ENCODE measurements at regions of chr1 and their contacts with region 1.

Region 1: GRCh38 chr1:204207136-204207616 is 6.6 kb downstream of the GOLT1A start:
- DNase-seq: peak; percentile 51 to 80 (median 66)
- ATAC-seq: peak; percentile 98
- H3K4me3 ChIP-seq: no peak overlapping the region
- H3K4me3 Mint-ChIP-seq: no peak overlapping the region
- H3K27ac ChIP-seq: no peak overlapping the region
- H3K27ac Mint-ChIP-seq: no peak overlapping the region
- H3K4me1 ChIP-seq: peaks cover 7% of the 10 kb centered on the region
- H3K4me1 Mint-ChIP-seq: peaks cover 18% of the 10 kb centered on the region
- H3K27me3 ChIP-seq: peaks cover 5 to 14% of the 10 kb centered on the region in 2 experiments
- H3K27me3 Mint-ChIP-seq: peaks cover 57% of the 10 kb centered on the region
- CTCF ChIP-seq: peak; percentile 86

Region 2: DNA sequence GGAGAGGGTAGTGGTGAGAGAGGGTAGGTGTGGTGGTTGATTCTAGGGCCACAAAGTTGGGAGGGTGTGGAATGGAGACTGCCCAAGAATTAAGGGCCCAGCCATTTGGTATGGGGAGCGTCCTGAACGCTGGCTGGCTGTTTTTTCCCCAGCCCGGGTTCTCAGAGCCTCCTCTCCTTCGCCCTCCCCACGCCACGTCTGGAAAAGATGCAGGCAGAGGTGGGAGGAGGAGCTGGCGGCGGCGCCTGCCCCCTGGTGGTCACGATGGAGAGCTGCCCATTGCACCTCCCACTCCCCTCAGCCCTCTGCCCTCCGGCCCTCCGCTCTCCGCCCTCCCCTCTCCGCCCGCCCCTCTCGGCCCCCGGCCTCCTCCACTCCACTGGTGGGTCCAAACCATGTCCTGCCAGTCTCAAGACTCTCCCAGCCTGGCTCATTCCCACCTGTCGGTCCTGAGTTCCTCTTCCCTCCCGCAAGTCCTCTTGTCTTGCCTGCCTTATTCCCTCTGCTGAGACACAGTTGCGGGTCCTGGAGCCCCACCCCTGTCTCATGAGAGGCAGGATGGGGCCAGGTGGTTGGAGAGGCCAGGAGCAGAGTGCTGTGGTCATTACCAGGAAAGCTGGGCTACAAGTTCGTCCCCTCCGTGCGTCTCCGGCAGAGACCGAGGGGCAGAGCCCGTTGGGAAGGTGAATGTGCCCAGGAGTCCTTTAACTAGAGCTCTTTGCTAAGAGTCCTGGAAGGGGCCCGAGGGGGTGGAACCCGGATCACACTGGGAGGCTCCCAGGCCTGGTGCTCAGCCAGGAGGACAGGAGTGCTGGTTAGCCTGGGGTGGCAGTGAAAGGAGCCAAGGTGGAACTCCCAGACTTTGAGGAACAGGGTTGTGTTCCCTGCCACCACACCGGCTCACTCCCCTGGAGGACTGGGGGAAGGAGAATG is 77.9 kb before region 1 on chr1:
- CTCF ChIA-PET with region 1: no interaction called
- POLR2A ChIA-PET with region 1: no interaction called
- intact Hi-C with region 1: no loop called
- DNase-seq: peak; percentile 27 to 85 (median 42)
- ATAC-seq: peak; percentile 87
- H3K4me3 ChIP-seq: no peak overlapping the region
- H3K4me3 Mint-ChIP-seq: no peak overlapping the region
- H3K27ac ChIP-seq: no peak overlapping the region
- H3K27ac Mint-ChIP-seq: no peak overlapping the region
- H3K4me1 ChIP-seq: peaks cover 11% of the 10 kb centered on the region
- H3K4me1 Mint-ChIP-seq: peaks cover 9% of the 10 kb centered on the region
- H3K27me3 ChIP-seq: no peaks in the 10 kb centered on the region
- H3K27me3 Mint-ChIP-seq: no peaks in the 10 kb centered on the region
- CTCF ChIP-seq: peak; percentile 87

Region 3: DNA sequence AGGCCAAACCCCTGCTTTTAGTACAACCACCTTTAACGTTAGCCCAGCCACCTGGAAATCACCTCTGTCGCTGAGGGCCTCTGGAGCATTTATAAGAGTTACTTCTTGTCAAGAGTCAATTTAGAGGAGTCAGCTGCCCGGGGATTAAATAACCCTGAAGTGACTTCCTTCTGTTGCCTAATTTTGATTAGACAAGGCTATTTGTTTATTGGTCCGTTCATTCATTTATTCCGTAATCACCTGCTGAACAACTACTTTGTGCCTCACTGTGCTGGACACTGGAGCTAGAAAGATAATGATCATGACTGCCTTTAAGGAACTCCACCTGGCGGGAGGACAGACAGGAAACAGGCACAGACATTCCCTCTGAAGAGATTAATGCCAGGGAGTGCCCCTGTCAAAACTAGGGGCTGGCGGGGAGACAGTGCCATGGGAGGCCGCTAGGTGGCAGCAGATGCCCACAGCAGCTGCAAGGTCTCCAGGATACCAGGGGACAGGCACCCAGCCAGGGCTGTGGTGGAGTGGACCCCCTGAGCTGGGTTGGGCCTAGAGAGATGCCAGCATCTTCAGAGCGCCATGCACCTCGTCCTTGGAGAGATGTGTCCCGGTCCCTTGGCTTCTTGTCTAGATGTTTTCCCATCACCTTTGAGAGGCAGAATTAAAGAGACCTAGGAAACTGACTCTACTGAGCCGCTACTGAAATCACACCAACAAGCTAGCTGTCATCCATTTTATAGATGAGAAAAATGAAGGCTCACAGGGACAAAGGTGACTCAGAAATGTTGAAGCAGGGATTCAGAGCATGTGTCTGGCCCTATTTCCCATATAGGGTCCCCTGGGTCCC is 44.7 kb before region 1 on chr1:
- CTCF ChIA-PET with region 1: interaction called, 7 read pairs
- POLR2A ChIA-PET with region 1: no interaction called
- intact Hi-C with region 1: loop called (anchors 1 kb)
- DNase-seq: peak; percentile 60 to 86 (median 72)
- ATAC-seq: peak; percentile 98
- H3K4me3 ChIP-seq: no peak overlapping the region
- H3K4me3 Mint-ChIP-seq: no peak overlapping the region
- H3K27ac ChIP-seq: no peak overlapping the region
- H3K27ac Mint-ChIP-seq: no peak overlapping the region
- H3K4me1 ChIP-seq: no peaks in the 10 kb centered on the region
- H3K4me1 Mint-ChIP-seq: no peaks in the 10 kb centered on the region
- H3K27me3 ChIP-seq: no peaks in the 10 kb centered on the region
- H3K27me3 Mint-ChIP-seq: peaks cover 18% of the 10 kb centered on the region
- CTCF ChIP-seq: peak; percentile 99

Region 4: DNA sequence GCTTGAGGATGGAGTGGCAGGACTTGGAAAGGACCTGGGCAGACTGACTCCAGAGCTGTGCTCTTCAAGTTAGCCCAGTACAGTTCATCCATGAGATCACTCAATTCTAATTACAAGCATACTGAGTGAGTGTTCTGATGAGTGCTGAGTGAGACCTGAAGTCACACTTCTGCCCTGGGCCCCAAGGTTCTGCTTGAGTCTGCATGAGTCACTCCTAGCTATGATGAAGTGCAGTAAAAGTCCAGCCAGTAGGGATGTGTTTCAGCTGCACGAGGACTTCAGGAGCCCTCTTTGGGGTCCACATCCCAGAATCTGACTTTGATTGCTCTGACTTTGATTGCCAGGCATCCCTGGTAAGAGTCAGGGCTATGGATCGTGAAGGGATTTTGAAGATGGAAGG is 116.7 kb after region 1 on chr1:
- CTCF ChIA-PET with region 1: no interaction called
- POLR2A ChIA-PET with region 1: no interaction called
- intact Hi-C with region 1: no loop called
- DNase-seq: no peak
- ATAC-seq: no peak
- H3K4me3 ChIP-seq: no peak overlapping the region
- H3K4me3 Mint-ChIP-seq: no peak overlapping the region
- H3K27ac ChIP-seq: no peak overlapping the region
- H3K27ac Mint-ChIP-seq: no peak overlapping the region
- H3K4me1 ChIP-seq: no peaks in the 10 kb centered on the region
- H3K4me1 Mint-ChIP-seq: no peaks in the 10 kb centered on the region
- H3K27me3 ChIP-seq: no peaks in the 10 kb centered on the region
- H3K27me3 Mint-ChIP-seq: no peaks in the 10 kb centered on the region
- CTCF ChIP-seq: no peak

Measured in CD4-positive, alpha-beta T cell (primary cell).